MCF 10A (cell line): ENCODE measurements at regions of chr4 and their contacts with region 1.

Region 1: GRCh38 chr4:176789955-176790354 is 2.8 kb downstream of the VEGFC start:
- DNase-seq: peak; percentile 68
- H3K4me3 Mint-ChIP-seq: peak overlapping the region; percentile 85
- H3K27ac Mint-ChIP-seq: no peak overlapping the region
- H3K4me1 Mint-ChIP-seq: peaks cover 45% of the 10 kb centered on the region
- H3K27me3 Mint-ChIP-seq: no peaks in the 10 kb centered on the region
- CTCF ChIP-seq: peak; percentile 49

Region 2: GRCh38 chr4:176443117-176443516 is 346.8 kb before region 1 on chr4:
- CTCF ChIA-PET with region 1: no interaction called
- POLR2A ChIA-PET with region 1: interaction called, 3 read pairs
- intact Hi-C with region 1: loop called (anchors 5 kb)
- DNase-seq: peak; percentile 90
- H3K4me3 Mint-ChIP-seq: peak overlapping the region; percentile 61
- H3K27ac Mint-ChIP-seq: peak overlapping the region; percentile 96
- H3K4me1 Mint-ChIP-seq: peaks cover 34% of the 10 kb centered on the region
- H3K27me3 Mint-ChIP-seq: no peaks in the 10 kb centered on the region
- CTCF ChIP-seq: no peak

Region 3: GRCh38 chr4:176635372-176636261 is 154.3 kb before region 1 on chr4:
- CTCF ChIA-PET with region 1: interaction called, 6 read pairs
- POLR2A ChIA-PET with region 1: no interaction called
- intact Hi-C with region 1: loop called (anchors 1 kb)
- DNase-seq: peak; percentile 92
- H3K4me3 Mint-ChIP-seq: peak overlapping the region; percentile 6
- H3K27ac Mint-ChIP-seq: peak overlapping the region; percentile 85
- H3K4me1 Mint-ChIP-seq: peaks cover 38% of the 10 kb centered on the region
- H3K27me3 Mint-ChIP-seq: no peaks in the 10 kb centered on the region
- CTCF ChIP-seq: peak; percentile 18

Region 4: DNA sequence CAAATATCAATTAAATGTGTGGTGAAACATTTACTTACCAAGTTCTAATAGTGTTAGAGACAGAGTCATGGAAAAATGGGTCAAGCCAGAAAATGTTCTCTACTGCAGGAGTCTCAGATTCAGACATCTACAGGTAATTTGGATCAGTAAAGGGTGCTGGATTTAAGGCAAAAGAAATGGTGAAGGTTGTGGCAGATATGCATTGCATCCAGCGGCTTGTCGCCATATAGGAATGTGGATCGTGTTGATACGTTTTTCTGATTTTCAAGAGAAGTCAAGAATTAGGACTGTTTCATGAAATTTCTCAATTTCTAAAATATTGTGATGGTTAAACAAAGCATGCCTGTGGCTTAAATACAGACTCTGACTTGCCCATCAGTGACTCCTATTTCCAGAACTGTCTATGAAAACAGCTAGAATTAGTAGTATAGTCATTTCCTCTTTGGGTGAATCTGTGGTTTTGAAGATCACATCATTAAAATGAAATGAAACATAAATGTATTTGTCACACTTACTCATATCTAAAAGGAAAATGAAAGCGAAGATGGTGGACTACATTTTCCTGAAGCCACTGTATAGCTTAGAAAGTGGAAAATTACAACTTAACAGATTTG is 112.9 kb after region 1 on chr4:
- CTCF ChIA-PET with region 1: no interaction called
- POLR2A ChIA-PET with region 1: no interaction called
- intact Hi-C with region 1: loop called (anchors 2 kb)
- DNase-seq: peak; percentile 60
- H3K4me3 Mint-ChIP-seq: peak overlapping the region; percentile 41
- H3K27ac Mint-ChIP-seq: peak overlapping the region; percentile 70
- H3K4me1 Mint-ChIP-seq: peaks cover 5% of the 10 kb centered on the region
- H3K27me3 Mint-ChIP-seq: no peaks in the 10 kb centered on the region
- CTCF ChIP-seq: no peak

Region 5: GRCh38 chr4:177047070-177047850 is 257.3 kb after region 1 on chr4:
- CTCF ChIA-PET with region 1: interaction called, 13 read pairs
- POLR2A ChIA-PET with region 1: interaction called, 6 read pairs
- intact Hi-C with region 1: loop called (anchors 1 kb)
- DNase-seq: peak; percentile 87
- H3K4me3 Mint-ChIP-seq: no peak overlapping the region
- H3K27ac Mint-ChIP-seq: no peak overlapping the region
- H3K4me1 Mint-ChIP-seq: no peaks in the 10 kb centered on the region
- H3K27me3 Mint-ChIP-seq: no peaks in the 10 kb centered on the region
- CTCF ChIP-seq: peak; percentile 72